ENCODE measurements at regions of chr6 and their contacts with region 1.

Region 1: DNA sequence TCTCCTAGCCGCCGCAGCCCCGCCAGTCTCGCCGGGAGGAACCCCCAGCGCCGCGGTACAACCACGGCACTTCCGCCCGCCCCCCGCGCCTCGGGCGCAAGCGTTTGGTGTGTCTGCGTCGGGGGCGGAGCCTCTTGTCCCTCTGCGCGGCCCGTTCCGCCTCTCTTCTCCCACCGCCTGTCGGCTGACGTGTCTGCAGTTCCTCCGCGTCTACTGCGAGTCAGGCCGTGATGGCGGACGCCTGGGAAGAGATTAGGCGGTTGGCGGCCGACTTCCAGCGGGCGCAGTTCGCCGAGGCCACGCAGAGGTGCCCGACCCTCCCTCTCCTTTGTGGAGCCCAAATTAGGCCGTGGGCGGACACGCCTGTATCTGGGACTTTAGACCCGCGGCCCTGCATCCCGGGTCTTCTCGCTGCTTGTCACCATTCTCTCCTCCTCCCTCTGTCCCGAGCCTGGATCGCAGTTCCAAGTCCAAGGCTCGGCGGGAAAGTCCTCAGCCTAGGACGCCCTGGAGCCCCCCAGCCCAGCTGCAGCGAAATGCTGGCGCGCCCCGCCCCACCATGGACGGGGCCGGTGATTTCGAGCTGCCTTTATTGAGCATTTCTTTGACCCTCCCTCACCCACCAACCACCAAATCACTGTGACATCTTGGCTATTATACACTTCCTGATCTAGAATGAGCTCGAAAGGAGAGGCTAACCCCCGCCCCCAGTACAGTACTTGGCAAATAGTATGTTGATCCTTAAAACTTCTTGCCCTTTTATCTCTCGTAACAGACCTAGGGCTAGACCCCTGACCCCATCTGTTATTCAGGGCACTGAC is at the start of gene UFL1:
- DNase-seq: peak; percentile 94
- H3K4me3 Mint-ChIP-seq: peak within 1 kb of the TSS; percentile 98
- H3K27ac Mint-ChIP-seq: peak within 1 kb of the TSS; percentile 99
- H3K4me1 Mint-ChIP-seq: peaks cover 16% of the 10 kb centered on the region
- H3K27me3 Mint-ChIP-seq: no peaks in the 10 kb centered on the region
- total RNA-seq, gene UFL1: 28.8 to 29.7 TPM

Region 2: GRCh38 chr6:95577304-95578105 is 944.3 kb before region 1 on chr6 and contains the start of gene MANEA:
- CTCF ChIA-PET with region 1: no interaction called
- POLR2A ChIA-PET with region 1: no interaction called
- intact Hi-C with region 1: loop called (anchors 1 kb)
- DNase-seq: peak; percentile 85
- H3K4me3 Mint-ChIP-seq: peak within 1 kb of the TSS; percentile 90
- H3K27ac Mint-ChIP-seq: peak within 1 kb of the TSS; percentile 96
- H3K4me1 Mint-ChIP-seq: peaks cover 38% of the 10 kb centered on the region
- H3K27me3 Mint-ChIP-seq: no peaks in the 10 kb centered on the region
- total RNA-seq, gene MANEA: 16.3 to 18.7 TPM

Region 3: GRCh38 chr6:96015518-96016333 is 506.1 kb before region 1 on chr6 and contains the start of gene FUT9:
- CTCF ChIA-PET with region 1: no interaction called
- POLR2A ChIA-PET with region 1: no interaction called
- intact Hi-C with region 1: no loop called
- DNase-seq: no peak
- H3K4me3 Mint-ChIP-seq: no peak within 1 kb of the TSS
- H3K27ac Mint-ChIP-seq: no peak within 1 kb of the TSS
- H3K4me1 Mint-ChIP-seq: no peaks in the 10 kb centered on the region
- H3K27me3 Mint-ChIP-seq: peaks cover 15% of the 10 kb centered on the region
- total RNA-seq, gene FUT9: not detected

Region 4: DNA sequence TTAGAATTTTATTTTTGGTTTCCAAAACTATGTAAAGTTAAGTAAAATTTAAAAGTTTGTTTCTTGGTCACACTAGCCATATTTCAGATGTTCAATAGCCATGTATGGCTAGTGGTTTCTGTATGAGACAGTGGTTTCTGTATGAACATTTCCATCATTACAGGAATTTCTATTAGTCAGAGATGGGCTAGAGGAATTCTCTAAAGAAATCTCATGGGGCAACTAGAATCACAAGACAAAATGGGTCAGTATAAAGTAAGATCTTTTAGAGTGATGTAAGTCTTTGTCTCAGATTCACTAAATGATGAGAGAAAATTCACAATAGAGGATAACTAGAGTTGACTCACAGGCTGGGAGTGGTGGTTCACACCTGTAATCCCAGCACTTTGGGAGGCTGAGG is 357.1 kb before region 1 on chr6:
- CTCF ChIA-PET with region 1: no interaction called
- POLR2A ChIA-PET with region 1: no interaction called
- intact Hi-C with region 1: no loop called
- DNase-seq: no peak
- H3K4me3 Mint-ChIP-seq: no peak overlapping the region
- H3K27ac Mint-ChIP-seq: no peak overlapping the region
- H3K4me1 Mint-ChIP-seq: no peaks in the 10 kb centered on the region
- H3K27me3 Mint-ChIP-seq: peaks cover 2% of the 10 kb centered on the region

Region 5: GRCh38 chr6:96468681-96469224 is 53.1 kb before region 1 on chr6:
- CTCF ChIA-PET with region 1: interaction called, 3 read pairs
- POLR2A ChIA-PET with region 1: no interaction called
- intact Hi-C with region 1: loop called (anchors 2 kb)
- DNase-seq: no peak
- H3K4me3 Mint-ChIP-seq: no peak overlapping the region
- H3K27ac Mint-ChIP-seq: no peak overlapping the region
- H3K4me1 Mint-ChIP-seq: peaks cover 20% of the 10 kb centered on the region
- H3K27me3 Mint-ChIP-seq: peaks cover 2% of the 10 kb centered on the region

Region 6: GRCh38 chr6:96491926-96492325 is 29.9 kb before region 1 on chr6:
- CTCF ChIA-PET with region 1: no interaction called
- POLR2A ChIA-PET with region 1: no interaction called
- intact Hi-C with region 1: no loop called
- DNase-seq: no peak
- H3K4me3 Mint-ChIP-seq: no peak overlapping the region
- H3K27ac Mint-ChIP-seq: no peak overlapping the region
- H3K4me1 Mint-ChIP-seq: no peaks in the 10 kb centered on the region
- H3K27me3 Mint-ChIP-seq: no peaks in the 10 kb centered on the region

Region 7: DNA sequence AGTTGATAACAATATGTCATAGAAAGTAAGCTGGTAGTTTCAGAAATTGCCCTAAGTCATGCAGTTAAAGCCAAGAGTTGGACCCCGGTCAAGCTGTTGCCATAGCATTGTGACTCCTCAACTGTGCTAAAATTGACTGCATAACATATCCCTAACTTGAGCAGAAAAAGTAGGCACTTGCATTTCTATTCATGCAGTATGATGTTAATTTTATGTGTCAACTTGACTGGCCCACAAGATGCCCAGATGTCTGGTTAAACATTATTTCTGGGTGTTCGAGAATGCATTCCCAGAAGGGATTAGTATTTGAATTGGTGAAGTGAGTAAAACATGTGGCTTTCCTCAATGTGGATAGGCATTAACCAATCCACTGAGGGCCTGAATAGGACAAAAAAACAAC is 179.1 kb after region 1 on chr6:
- CTCF ChIA-PET with region 1: no interaction called
- POLR2A ChIA-PET with region 1: no interaction called
- intact Hi-C with region 1: no loop called
- DNase-seq: no peak
- H3K4me3 Mint-ChIP-seq: no peak overlapping the region
- H3K27ac Mint-ChIP-seq: no peak overlapping the region
- H3K4me1 Mint-ChIP-seq: no peaks in the 10 kb centered on the region
- H3K27me3 Mint-ChIP-seq: peaks cover 3% of the 10 kb centered on the region

Region 8: DNA sequence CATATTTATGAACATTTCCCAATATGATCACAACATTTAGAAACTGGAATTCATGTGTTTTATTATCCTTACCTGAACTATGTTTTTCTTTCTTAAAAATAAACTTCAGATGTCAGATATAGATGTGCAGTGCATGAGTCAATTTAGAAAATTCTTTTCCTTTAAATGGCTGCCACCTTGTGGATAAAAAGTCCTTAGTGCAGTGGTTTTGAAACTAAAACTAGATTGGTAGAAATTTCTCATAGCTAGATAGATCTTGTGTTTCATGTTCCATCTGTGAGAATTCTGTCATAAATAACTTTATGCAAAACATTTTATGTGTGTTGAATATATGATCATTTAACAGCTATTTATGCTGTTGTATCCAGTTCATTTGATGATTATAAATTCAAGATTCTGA is 537.6 kb after region 1 on chr6:
- CTCF ChIA-PET with region 1: interaction called, 3 read pairs
- POLR2A ChIA-PET with region 1: no interaction called
- intact Hi-C with region 1: loop called (anchors 10 kb)
- DNase-seq: no peak
- H3K4me3 Mint-ChIP-seq: no peak overlapping the region
- H3K27ac Mint-ChIP-seq: no peak overlapping the region
- H3K4me1 Mint-ChIP-seq: no peaks in the 10 kb centered on the region
- H3K27me3 Mint-ChIP-seq: no peaks in the 10 kb centered on the region